ENCODE measurements at regions of chr3 and their contacts with region 1.

Region 1: GRCh38 chr3:55402886-55403582 is 84.1 kb downstream of the WNT5A start:
- DNase-seq: no peak
- H3K4me3 ChIP-seq: no peak overlapping the region
- H3K27ac ChIP-seq: no peak overlapping the region
- H3K4me1 ChIP-seq: no peaks in the 10 kb centered on the region
- H3K27me3 ChIP-seq: no peaks in the 10 kb centered on the region
- CTCF ChIP-seq: no peak

Region 2: DNA sequence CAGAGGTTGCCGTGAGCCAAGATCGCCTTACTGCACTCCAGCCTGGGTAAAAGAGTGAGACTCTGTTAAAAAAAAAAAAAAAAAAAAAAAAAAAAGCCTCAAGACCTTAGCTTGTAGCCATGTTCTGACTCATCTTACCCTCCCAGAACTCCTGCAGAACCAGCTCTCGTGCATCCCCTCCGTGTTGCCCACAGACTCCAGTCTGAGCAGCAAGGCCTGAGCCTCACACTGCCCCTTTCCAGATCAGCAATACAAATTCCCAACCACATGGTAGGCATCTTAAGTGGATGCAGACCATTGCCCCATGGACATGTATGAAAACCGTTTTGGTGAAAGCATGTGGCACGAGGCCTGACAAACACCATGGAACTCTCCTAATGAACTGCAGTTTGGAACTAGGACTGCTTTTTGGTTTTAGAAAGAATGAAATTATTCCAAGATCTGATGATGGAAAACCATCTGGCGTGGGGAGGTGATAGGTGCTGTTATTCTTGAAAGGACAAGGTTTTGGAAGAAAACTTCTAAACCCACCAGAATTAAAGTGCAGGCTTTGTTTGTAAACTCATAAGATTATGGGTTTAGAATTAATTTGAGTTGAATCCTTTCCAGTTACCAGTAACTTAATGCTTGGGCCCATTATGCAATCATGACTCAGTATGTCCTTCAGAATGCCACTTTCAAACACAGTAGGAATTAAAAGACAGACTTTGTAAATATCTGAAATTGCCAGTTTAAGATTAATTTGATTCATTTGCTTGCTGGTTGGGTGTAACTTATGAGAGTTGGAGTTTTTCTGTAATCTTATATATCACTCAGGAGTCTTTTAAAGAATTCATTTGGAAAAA is 311.4 kb before region 1 on chr3:
- intact Hi-C with region 1: no loop called
- DNase-seq: no peak
- H3K4me3 ChIP-seq: no peak overlapping the region
- H3K27ac ChIP-seq: no peak overlapping the region
- H3K4me1 ChIP-seq: no peaks in the 10 kb centered on the region
- H3K27me3 ChIP-seq: no peaks in the 10 kb centered on the region
- CTCF ChIP-seq: no peak

Region 3: DNA sequence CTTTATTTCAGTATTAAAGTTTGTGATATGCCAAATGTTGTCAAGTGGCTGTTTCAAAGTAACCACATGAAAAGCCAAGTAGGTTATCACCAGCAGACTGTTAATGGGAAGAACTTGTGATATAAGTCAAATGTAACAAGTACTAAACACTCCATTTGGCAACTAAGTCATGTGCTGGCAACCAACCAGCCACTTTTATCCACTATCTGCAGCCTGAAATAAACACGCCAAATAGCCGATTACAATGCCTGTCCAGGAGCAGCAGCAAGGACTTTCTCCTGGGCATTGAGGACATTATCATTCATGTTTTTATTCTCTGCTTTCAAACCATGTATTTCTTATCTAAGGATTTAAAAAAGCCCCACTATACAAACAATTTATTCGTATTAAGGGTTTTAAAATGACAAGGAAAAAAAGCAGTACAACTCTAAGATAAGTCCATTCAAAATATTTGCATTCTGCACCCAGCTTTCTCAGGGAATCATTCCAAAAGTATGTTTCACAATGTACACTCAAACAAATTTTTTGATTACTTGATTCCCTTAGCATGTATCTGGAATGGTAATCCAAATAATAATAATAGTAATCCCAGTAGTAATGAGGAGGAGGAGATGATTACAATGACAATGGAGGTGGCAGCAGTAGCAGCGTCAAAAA is 616.6 kb after region 1 on chr3:
- intact Hi-C with region 1: loop called (anchors 5 kb)
- DNase-seq: no peak
- H3K4me3 ChIP-seq: no peak overlapping the region
- H3K27ac ChIP-seq: no peak overlapping the region
- H3K4me1 ChIP-seq: no peaks in the 10 kb centered on the region
- H3K27me3 ChIP-seq: no peaks in the 10 kb centered on the region
- CTCF ChIP-seq: no peak

Measured in tibial artery (tissue), 4 donors.